ENCODE measurements at regions of chr1 and their contacts with region 1.

Region 1: GRCh38 chr1:39214998-39215873 is 10.7 kb downstream of the MACF1 start:
- DNase-seq: peak in 1 of 2 experiments; percentile 41
- H3K4me3 ChIP-seq: peak overlapping the region; percentile 19
- H3K4me3 Mint-ChIP-seq: peak overlapping the region; percentile 61
- H3K27ac Mint-ChIP-seq: peak overlapping the region; percentile 83
- H3K4me1 ChIP-seq: peaks cover 58% of the 10 kb centered on the region
- H3K4me1 Mint-ChIP-seq: peaks cover 23% of the 10 kb centered on the region
- H3K27me3 ChIP-seq: no peaks in the 10 kb centered on the region
- H3K27me3 Mint-ChIP-seq: no peaks in the 10 kb centered on the region
- CTCF ChIP-seq: no peak

Region 2: DNA sequence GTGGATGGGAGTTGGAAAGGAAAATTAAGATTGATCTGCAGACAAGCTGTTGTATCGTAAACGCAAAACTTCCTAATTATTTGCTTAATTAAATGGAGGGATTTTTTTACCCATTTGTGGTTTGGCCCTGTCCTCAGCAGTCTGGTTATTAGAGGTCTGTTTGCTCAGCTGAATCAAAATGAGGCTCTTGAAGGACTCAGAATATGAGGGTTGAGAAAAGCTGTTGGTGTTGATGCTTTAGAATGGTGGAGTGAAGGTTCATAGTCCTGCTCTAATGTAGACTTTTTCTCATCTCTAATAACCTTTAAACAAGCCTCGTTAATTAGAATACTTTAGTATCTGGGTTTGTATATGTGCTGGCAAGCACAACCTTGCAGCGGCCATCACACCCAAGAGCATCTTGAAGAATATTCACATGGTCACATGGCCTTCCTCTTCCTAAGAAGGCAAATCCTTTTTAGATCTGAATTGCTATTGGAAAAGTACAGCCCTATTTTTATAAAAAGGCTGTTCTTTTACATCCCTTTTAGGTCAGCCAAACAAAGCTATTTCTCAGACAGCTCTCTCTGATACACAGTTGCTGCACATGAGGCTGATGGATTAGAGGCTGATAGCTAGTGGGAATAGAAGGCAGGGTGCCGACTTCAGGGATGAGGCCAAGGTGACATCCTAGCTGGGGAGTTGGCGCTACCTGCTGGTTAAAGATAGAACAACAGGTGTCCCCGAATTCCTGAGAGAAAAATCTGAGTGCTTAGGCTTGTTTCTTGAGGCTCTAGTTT is 43.1 kb after region 1 on chr1:
- CTCF ChIA-PET with region 1: interaction called, 4 read pairs
- POLR2A ChIA-PET with region 1: no interaction called
- intact Hi-C with region 1: loop called (anchors 1 kb)
- DNase-seq: peak; percentile 55 to 70
- H3K4me3 ChIP-seq: no peak overlapping the region
- H3K4me3 Mint-ChIP-seq: no peak overlapping the region
- H3K27ac Mint-ChIP-seq: no peak overlapping the region
- H3K4me1 ChIP-seq: no peaks in the 10 kb centered on the region
- H3K4me1 Mint-ChIP-seq: no peaks in the 10 kb centered on the region
- H3K27me3 ChIP-seq: no peaks in the 10 kb centered on the region
- H3K27me3 Mint-ChIP-seq: no peaks in the 10 kb centered on the region
- CTCF ChIP-seq: peak; percentile 62 to 75

Region 3: DNA sequence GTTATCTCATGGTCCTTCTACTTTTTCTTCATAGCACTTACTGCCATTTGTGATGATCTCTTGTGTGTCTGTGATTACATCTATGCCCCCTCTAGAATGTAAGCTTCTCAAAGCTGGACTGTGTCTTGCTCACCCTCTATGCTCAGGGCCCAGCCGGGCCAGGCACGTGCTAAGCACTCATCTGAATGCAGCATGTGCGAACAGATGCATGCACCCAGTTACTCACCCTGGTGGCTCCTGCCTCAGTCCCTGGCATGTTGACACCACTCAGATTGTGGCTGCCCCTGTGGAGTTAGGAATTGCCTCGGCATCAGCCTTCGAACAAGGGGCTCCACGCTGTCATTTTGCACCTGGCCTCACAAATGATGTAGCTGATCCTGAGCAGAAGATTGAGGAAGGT is 380.9 kb after region 1 on chr1:
- CTCF ChIA-PET with region 1: no interaction called
- POLR2A ChIA-PET with region 1: no interaction called
- intact Hi-C with region 1: no loop called
- DNase-seq: no peak
- H3K4me3 ChIP-seq: no peak overlapping the region
- H3K4me3 Mint-ChIP-seq: no peak overlapping the region
- H3K27ac Mint-ChIP-seq: no peak overlapping the region
- H3K4me1 ChIP-seq: no peaks in the 10 kb centered on the region
- H3K4me1 Mint-ChIP-seq: no peaks in the 10 kb centered on the region
- H3K27me3 ChIP-seq: no peaks in the 10 kb centered on the region
- H3K27me3 Mint-ChIP-seq: no peaks in the 10 kb centered on the region
- CTCF ChIP-seq: no peak

Measured in Caco-2 (cell line).